IMR-90 (cell line): ENCODE measurements at regions of chr17 and their contacts with region 1.

Region 1: DNA sequence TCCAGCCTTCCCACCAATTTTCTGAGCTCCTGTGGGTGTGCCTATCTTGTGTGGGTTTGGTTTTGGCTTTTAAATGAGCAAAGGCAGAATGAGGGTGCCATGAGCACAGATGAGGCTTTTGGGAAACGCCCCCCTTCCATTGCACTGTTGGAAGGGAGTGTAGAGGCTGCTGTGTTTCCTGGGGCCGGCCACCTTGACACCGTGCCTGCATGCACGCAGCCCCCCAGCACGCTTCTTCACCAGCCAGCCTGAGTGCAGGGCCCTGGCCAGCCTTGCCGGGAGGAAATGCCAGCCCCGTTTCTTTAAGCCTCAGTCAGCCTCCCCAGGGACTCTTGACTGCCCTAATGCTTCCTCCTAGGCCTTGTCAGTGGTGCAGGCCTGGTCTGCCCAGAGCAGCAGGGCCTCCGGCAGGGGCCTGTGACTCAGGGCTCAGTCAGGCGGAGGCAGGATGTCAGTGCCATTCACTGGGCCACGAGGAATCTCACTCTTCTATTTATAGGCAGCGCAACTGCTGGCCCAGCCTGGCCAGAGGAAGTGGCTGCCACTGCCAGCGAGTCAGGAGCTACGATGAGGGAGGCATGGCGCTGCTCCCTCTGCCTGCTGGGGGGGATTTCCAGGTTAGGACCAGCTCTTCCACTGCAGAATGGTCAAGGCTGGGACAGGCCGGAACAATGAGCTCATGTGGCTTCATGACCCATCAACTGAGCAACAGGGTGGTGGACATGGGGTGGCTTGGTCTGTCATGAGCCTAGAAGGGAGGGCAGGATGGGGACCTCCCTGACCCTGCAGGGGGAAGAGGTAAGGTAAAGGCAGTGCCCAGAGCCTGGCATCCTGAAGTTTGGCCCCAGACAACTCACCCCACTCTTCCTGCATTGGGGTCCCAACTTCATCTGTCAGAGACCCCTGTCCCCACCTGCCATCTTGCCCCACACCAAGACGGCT is 205.2 kb downstream of the RAB11FIP4 start:
- DNase-seq: peak; percentile 98
- ATAC-seq: peak; percentile 94
- H3K4me3 ChIP-seq: no peak overlapping the region
- H3K27ac ChIP-seq: peak overlapping the region; percentile 96
- H3K4me1 ChIP-seq: peaks cover 40% of the 10 kb centered on the region
- H3K27me3 ChIP-seq: no peaks in the 10 kb centered on the region
- CTCF ChIP-seq: peak; percentile 15; the same call in 1 of the 2 replicates
- POLR2A ChIP-seq: peak; percentile 64; the same call in 1 of the 2 replicates
- RAD21 ChIP-seq: peak; percentile 40

Region 2: DNA sequence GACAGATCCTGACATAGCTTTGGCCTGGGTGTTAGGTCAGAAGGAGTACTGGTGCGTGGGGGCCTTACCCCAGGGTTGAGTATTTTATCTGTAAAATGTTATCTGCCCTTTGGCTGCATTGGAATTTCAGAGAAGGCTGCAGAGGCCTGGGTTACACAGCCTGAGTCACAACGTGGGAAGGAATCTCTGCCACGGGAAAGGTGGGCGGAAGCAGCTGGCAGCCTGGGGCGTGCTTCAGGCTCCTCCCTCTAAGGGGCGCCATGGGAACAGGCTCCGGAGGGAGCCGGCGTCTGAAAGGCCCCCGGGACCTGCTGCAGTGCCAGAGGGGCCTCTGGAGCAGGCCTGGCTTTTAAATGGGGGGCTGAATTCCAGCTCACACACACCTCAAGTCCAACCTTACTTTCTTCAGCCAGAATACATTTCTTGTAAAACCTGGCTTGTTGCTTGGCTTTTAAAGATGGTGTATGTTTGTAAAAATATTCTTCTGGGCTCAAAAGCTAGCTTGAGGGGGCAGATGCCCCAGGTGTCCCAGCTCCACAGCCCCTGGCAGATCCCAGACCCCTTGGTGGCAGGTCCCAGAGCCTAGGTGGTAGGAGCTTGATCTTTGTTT is 63.0 kb before region 1 on chr17:
- CTCF ChIA-PET with region 1: no interaction called
- POLR2A ChIA-PET with region 1: no interaction called
- dilution Hi-C with region 1: no loop called
- in situ Hi-C with region 1: no loop called
- intact Hi-C with region 1: no loop called
- DNase-seq: peak; percentile 88
- ATAC-seq: peak; percentile 93
- H3K4me3 ChIP-seq: no peak overlapping the region
- H3K27ac ChIP-seq: no peak overlapping the region; the same call in 1 of the 2 replicates
- H3K4me1 ChIP-seq: peaks cover 13% of the 10 kb centered on the region
- H3K27me3 ChIP-seq: no peaks in the 10 kb centered on the region
- CTCF ChIP-seq: peak; percentile 56
- POLR2A ChIP-seq: no peak
- RAD21 ChIP-seq: peak; percentile 62

Region 3: GRCh38 chr17:31558748-31559644 is 37.7 kb before region 1 on chr17:
- CTCF ChIA-PET with region 1: no interaction called
- POLR2A ChIA-PET with region 1: no interaction called
- dilution Hi-C with region 1: no loop called
- in situ Hi-C with region 1: no loop called
- intact Hi-C with region 1: loop called (anchors 2 kb)
- DNase-seq: peak; percentile 80
- ATAC-seq: peak; percentile 94
- H3K4me3 ChIP-seq: peak overlapping the region; percentile 70
- H3K27ac ChIP-seq: peak overlapping the region; percentile 87
- H3K4me1 ChIP-seq: peaks cover 17% of the 10 kb centered on the region
- H3K27me3 ChIP-seq: no peaks in the 10 kb centered on the region
- CTCF ChIP-seq: peak; percentile 98
- POLR2A ChIP-seq: peak; percentile 53; the same call in 1 of the 2 replicates
- RAD21 ChIP-seq: peak; percentile 90